ENCODE measurements at regions of chr3 and their contacts with region 1.

Region 1: DNA sequence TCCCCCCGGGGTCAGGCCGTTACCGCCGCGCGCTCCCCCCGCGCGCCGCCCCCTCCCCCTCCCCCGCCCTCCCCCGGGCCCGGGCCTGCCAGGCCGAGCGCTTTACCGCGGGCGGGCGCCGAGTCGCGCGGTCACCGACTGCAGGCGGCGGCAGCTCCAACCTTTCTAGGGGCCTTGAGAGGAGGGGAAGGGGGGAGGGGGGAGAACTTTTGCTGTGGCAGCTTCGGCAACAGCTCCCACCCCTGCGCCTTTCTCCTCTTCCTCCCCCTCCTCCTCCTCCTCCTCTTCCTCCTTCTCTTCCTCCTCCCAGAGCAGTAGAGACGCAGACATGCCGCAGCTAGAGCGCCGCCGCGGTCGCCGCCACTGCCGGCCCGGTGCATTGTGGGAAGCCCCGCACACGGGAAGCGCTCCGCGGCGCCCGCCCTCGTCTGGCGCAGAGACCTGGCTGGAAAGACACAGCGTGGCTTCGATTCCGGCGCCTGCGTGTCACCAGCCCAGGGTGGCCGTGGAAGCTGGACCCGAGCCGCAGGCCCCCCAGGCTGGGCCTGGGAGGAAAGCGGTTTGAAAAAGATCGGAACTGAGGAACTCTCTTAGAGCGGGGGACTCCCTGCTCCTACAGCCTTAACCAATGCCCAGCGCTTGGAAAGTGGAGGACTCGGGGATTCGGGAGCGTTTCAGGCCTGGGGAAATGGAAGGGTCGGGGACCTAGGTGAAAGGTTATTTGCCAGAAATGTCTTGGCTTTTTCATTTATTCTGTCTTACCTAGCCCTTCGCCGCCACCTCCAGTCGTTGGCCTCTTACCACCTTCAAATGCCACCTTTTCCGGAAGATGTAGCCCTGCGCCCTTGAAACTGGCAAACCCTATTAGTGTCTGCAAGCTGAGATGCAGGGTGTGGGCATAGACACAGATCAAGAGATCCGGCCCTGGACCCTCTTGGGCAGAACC is at the start of gene ZNF148:
- DNase-seq: peak; percentile 98
- H3K4me3 Mint-ChIP-seq: peak within 1 kb of the TSS; percentile 98
- H3K27ac Mint-ChIP-seq: peak within 1 kb of the TSS; percentile 98
- H3K4me1 Mint-ChIP-seq: peaks cover 32% of the 10 kb centered on the region
- H3K27me3 Mint-ChIP-seq: no peaks in the 10 kb centered on the region
- total RNA-seq, gene ZNF148: 31.8 and 38.0 TPM in 2 replicates

Region 2: DNA sequence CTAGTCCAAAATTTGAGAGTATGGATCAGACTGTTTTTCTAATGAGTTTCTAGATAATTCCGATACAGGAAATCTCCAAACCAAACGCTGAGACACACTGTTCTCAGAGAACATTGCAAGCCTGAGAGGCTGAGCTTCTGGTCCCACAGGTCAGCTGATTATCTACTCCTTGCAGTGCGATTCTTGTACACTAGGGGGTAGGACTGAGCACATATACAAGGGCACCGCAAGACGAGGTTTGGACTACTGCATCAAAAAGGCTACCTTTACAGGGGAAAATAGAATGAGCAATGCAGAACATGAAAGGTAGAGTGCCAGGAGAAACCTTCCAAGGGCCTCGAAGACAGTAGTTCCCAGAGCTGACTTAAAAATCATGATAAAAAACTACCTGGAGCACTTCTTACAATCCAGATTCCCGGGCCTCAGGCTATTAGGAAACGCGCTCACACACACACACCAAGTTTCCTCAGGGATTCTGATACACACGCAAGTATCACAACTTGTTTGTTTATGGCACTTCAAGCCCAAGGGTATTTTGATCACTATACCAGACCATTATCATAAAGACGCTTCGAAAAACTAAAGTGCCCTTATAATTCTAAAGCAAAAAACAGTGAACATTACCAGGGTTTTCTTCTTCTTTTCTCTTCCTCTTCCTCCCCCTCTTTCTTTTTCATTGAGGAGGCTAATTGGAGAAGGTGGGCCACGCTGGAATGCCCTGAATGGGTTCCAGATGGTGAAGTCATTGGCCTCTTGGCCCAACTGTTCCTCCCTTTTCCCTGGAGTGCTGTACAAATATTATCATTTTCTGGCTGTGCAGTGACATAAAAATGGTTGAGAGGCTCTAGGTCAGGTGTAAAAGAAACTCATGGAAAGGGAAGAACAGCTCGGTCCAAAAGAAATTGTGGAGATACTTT is 224.5 kb before region 1 on chr3:
- intact Hi-C with region 1: loop called (anchors 10 kb)
- DNase-seq: peak; percentile 90
- H3K4me3 Mint-ChIP-seq: no peak overlapping the region
- H3K27ac Mint-ChIP-seq: no peak overlapping the region
- H3K4me1 Mint-ChIP-seq: peaks cover 18% of the 10 kb centered on the region
- H3K27me3 Mint-ChIP-seq: peaks cover 36% of the 10 kb centered on the region

Region 3: GRCh38 chr3:125231895-125232294 is 143.4 kb before region 1 on chr3:
- intact Hi-C with region 1: loop called (anchors 5 kb)
- DNase-seq: no peak
- H3K4me3 Mint-ChIP-seq: no peak overlapping the region
- H3K27ac Mint-ChIP-seq: no peak overlapping the region
- H3K4me1 Mint-ChIP-seq: peaks cover 5% of the 10 kb centered on the region
- H3K27me3 Mint-ChIP-seq: no peaks in the 10 kb centered on the region

Region 4: GRCh38 chr3:125310623-125311081 is 64.6 kb before region 1 on chr3:
- intact Hi-C with region 1: loop called (anchors 10 kb)
- DNase-seq: peak; percentile 84
- H3K4me3 Mint-ChIP-seq: peak overlapping the region; percentile 85
- H3K27ac Mint-ChIP-seq: peak overlapping the region; percentile 91
- H3K4me1 Mint-ChIP-seq: peaks cover 27% of the 10 kb centered on the region
- H3K27me3 Mint-ChIP-seq: no peaks in the 10 kb centered on the region

Region 5: DNA sequence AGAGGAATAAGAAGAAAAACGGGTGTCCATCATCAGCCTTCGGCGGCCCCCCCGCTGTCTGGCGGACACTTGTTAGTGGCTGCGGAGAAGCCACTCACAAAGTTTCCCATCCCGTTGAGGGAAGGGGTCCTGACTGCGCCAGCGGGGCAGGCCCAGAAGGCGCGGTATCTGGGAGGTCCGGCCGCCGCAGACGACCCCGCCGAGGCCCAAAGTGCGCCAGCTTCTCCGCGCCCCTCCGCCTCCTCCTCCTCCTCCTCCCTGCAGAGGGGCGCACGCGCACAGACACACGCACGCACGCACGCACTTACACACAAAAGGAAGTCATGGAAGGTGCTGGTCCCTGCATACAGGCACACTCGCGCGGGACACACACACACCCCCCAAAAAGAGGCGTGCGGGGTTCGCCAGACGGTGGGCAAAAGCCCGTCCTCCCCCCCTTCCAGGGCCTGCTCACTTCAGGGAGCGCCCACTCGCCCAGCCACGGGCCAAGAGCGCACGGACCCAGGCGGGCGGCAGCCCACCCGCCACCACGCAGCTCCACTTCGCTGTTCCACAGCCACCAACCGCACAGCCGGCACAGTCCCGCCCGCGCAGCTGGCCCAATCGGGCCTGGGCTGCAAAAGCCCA is 18.1 kb before region 1 on chr3:
- intact Hi-C with region 1: loop called (anchors 2 kb)
- DNase-seq: peak; percentile 85
- H3K4me3 Mint-ChIP-seq: peak overlapping the region; percentile 84
- H3K27ac Mint-ChIP-seq: peak overlapping the region; percentile 71
- H3K4me1 Mint-ChIP-seq: peaks cover 44% of the 10 kb centered on the region
- H3K27me3 Mint-ChIP-seq: no peaks in the 10 kb centered on the region

Region 6: GRCh38 chr3:125519678-125520589 is 144.7 kb after region 1 on chr3 and contains the start of gene SNX4:
- intact Hi-C with region 1: loop called (anchors 10 kb)
- DNase-seq: peak; percentile 96
- H3K4me3 Mint-ChIP-seq: peak within 1 kb of the TSS; percentile 96
- H3K27ac Mint-ChIP-seq: peak within 1 kb of the TSS; percentile 87
- H3K4me1 Mint-ChIP-seq: peaks cover 24% of the 10 kb centered on the region
- H3K27me3 Mint-ChIP-seq: no peaks in the 10 kb centered on the region
- total RNA-seq, gene SNX4: 44.4 and 45.3 TPM in 2 replicates

Region 7: GRCh38 chr3:125594581-125595011 is 219.3 kb after region 1 on chr3:
- intact Hi-C with region 1: loop called (anchors 1 kb)
- DNase-seq: no peak
- H3K4me3 Mint-ChIP-seq: peak overlapping the region; percentile 90
- H3K27ac Mint-ChIP-seq: peak overlapping the region; percentile 85
- H3K4me1 Mint-ChIP-seq: peaks cover 21% of the 10 kb centered on the region
- H3K27me3 Mint-ChIP-seq: no peaks in the 10 kb centered on the region

Measured in activated CD4-positive, alpha-beta T cell treated with anti-CD3 and anti-CD28 coated beads, Interleukin-2, amount 10 ng/mL, durations not matched to agents 24 days and 14 days (primary cell).